Right lobe of liver (tissue), 6 donors: ENCODE measurements at regions of chr17 and their contacts with region 1.

Region 1: GRCh38 chr17:40895106-40895730 is 10.2 kb upstream of the KRT20 start:
- DNase-seq: no peak
- ATAC-seq: no peak
- H3K4me3 ChIP-seq: no peak overlapping the region
- H3K27ac ChIP-seq: no peak overlapping the region
- H3K4me1 ChIP-seq: no peaks in the 10 kb centered on the region
- H3K27me3 ChIP-seq: no peaks in the 10 kb centered on the region
- CTCF ChIP-seq: no peak
- POLR2A ChIP-seq: no peak

Region 2: GRCh38 chr17:40782450-40782849 is 112.8 kb before region 1 on chr17 and contains the start of gene KRT27:
- intact Hi-C with region 1: no loop called
- DNase-seq: no peak
- ATAC-seq: no peak
- H3K4me3 ChIP-seq: no peak within 1 kb of the TSS
- H3K27ac ChIP-seq: no peak within 1 kb of the TSS
- H3K4me1 ChIP-seq: no peaks in the 10 kb centered on the region
- H3K27me3 ChIP-seq: no peaks in the 10 kb centered on the region
- CTCF ChIP-seq: no peak
- POLR2A ChIP-seq: no peak
- total RNA-seq, gene KRT27: not detected

Region 3: GRCh38 chr17:41322094-41322902 is 427.1 kb after region 1 on chr17:
- intact Hi-C with region 1: loop called in 1 of 2 experiments (anchors 10 kb)
- DNase-seq: no peak
- ATAC-seq: peak; percentile 57 to 81 (median 70)
- H3K4me3 ChIP-seq: no peak overlapping the region
- H3K27ac ChIP-seq: no peak overlapping the region
- H3K4me1 ChIP-seq: no peaks in the 10 kb centered on the region
- H3K27me3 ChIP-seq: no peaks in the 10 kb centered on the region
- CTCF ChIP-seq: peak; percentile 66 to 72 (median 67)
- POLR2A ChIP-seq: no peak